PC-9 (cell line): ENCODE measurements at regions of chr14 and their contacts with region 1.

Region 1: GRCh38 chr14:77097700-77098528 is at the start of gene CIPC:
- DNase-seq: peak; percentile 99 to 100
- H3K4me3 ChIP-seq: peak within 1 kb of the TSS; percentile 83
- H3K27ac ChIP-seq: peak within 1 kb of the TSS; percentile 90
- H3K4me1 ChIP-seq: peaks cover 25% of the 10 kb centered on the region
- H3K27me3 ChIP-seq: no peaks in the 10 kb centered on the region
- CTCF ChIP-seq: no peak; the same call in 1 of the 2 replicates
- total RNA-seq, gene CIPC: 54.7 and 66.3 TPM in 2 replicates

Region 2: DNA sequence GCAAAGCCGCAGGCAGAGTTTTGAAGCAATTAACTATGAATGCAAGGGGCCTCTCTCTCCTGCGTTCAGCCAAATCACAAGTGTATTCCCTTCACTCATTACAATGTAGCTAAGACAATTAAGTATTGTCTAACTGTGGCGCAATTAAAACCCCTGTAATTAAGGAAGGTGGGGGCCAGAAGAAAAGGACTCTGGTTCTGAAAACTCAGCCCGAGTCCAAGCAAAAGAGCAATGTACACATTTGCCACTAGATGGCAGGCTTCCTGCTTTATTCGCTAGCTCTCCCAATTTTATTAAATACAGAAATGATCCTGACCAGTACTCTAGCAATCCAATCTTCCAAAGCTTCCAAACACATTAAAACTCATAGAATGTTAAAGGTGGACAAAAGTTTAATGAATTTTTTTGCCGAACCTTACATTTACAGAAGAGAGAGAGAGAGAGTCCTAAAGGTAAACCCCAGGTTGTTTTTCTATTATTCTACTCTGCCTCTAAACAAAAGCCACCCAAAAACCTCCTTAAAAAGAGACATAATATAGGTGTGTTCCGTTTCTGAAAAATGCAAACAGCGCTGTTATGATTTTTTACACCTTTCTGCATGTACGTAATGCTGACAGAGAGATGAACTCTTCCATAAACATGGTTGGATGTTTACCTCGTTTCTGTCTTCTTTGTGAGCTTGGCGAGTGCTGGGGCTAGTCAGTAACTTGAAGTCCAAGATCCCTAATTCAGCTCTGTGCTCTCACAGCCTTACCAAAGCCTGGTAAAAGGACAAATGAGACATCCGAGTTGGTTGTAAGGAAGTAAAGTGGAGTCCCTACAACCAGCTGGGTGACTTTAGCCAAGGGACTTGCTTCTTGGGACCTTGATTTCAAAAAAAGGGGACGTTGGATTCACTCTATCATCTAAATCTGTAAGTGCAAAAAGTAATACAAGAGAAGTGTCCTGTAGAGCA is 387.6 kb before region 1 on chr14:
- CTCF ChIA-PET with region 1: no interaction called
- POLR2A ChIA-PET with region 1: no interaction called
- intact Hi-C with region 1: loop called (anchors 1 kb)
- DNase-seq: peak in 1 of 2 experiments; percentile 35
- H3K4me3 ChIP-seq: no peak overlapping the region
- H3K27ac ChIP-seq: no peak overlapping the region
- H3K4me1 ChIP-seq: no peaks in the 10 kb centered on the region
- H3K27me3 ChIP-seq: peaks cover 93% of the 10 kb centered on the region
- CTCF ChIP-seq: peak; percentile 96

Region 3: GRCh38 chr14:76904740-76905438 is 193.0 kb before region 1 on chr14:
- CTCF ChIA-PET with region 1: interaction called, 3 read pairs
- POLR2A ChIA-PET with region 1: interaction called, 14 read pairs
- intact Hi-C with region 1: loop called (anchors 2 kb)
- DNase-seq: peak; percentile 98 to 100
- H3K4me3 ChIP-seq: peak overlapping the region; percentile 9; the same call in 1 of the 2 replicates
- H3K27ac ChIP-seq: peak overlapping the region; percentile 80
- H3K4me1 ChIP-seq: peaks cover 34% of the 10 kb centered on the region
- H3K27me3 ChIP-seq: no peaks in the 10 kb centered on the region
- CTCF ChIP-seq: no peak

Region 4: DNA sequence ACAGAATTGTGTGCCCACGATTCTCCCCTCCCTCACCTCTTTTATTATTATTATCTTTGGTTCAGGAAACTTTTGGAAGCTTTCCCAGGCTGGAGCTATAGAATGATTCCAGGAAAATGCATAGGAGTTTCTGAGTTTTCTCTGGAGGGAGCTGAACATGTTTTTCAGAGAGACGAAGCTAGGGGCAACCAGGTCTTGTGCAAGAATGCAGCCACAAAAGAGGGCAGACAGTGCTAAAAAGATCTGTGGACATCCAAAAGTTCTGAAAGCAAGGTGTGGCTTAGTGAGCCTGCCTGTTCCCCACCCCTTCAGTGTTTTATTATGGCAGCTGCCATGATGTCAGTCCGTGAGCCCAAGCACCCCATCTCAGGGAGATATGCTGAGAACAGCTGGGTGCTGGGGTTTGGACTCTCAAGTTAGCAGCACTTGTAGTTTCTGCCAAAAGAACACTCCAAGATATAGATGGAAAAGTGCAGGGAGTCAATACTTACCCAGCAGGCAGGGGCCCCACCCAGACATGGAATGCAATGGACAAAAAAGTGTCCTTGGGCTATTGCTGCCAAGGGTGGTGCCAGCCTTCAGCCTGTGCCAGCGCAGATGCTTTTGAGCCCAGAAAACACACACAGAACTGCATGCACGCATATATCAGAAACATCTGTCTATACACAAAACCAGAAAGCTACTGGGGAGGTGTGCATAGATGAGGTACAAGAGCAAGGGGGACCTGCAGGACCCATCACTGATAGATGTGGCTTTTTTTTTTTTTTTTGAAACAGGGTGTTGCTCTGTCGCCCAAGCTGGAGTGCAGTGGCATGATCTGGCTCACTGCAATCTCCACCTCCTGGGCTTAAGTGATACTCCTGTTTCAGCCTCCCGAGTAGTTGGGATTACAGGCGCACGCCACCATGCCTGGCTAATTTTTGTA is 52.4 kb before region 1 on chr14:
- CTCF ChIA-PET with region 1: no interaction called
- POLR2A ChIA-PET with region 1: interaction called, 12 read pairs
- intact Hi-C with region 1: no loop called
- DNase-seq: peak; percentile 91
- H3K4me3 ChIP-seq: peak overlapping the region; percentile 3; the same call in 1 of the 2 replicates
- H3K27ac ChIP-seq: peak overlapping the region; percentile 82
- H3K4me1 ChIP-seq: peaks cover 72% of the 10 kb centered on the region
- H3K27me3 ChIP-seq: no peaks in the 10 kb centered on the region
- CTCF ChIP-seq: no peak

Region 5: DNA sequence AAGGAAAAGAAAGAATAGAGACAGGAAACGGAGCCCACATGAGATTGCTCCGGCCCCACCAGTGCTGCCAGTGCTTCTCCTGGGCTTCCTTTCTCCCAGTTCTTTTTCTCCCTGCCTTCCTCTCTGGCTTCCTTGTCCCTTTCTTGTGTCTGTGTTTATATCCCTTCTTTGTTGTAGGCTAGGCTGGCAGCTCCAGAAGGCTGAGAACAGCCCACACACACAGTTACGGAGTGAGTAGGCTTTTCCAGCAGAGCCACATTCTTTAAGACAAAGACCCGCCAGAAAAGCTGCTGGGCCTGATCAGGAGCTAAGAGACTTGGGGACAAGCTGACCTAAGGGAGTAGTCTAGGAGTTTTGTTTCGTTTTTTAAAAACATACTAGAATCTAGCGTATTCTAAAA is 13.1 kb after region 1 on chr14:
- CTCF ChIA-PET with region 1: interaction called, 6 read pairs
- POLR2A ChIA-PET with region 1: interaction called, 19 read pairs
- intact Hi-C with region 1: loop called (anchors 1 kb)
- DNase-seq: peak; percentile 76 to 93
- H3K4me3 ChIP-seq: no peak overlapping the region
- H3K27ac ChIP-seq: peak overlapping the region; percentile 21; the same call in 1 of the 2 replicates
- H3K4me1 ChIP-seq: peaks cover 5% of the 10 kb centered on the region; the same call in 1 of the 2 replicates
- H3K27me3 ChIP-seq: no peaks in the 10 kb centered on the region
- CTCF ChIP-seq: no peak

Region 6: DNA sequence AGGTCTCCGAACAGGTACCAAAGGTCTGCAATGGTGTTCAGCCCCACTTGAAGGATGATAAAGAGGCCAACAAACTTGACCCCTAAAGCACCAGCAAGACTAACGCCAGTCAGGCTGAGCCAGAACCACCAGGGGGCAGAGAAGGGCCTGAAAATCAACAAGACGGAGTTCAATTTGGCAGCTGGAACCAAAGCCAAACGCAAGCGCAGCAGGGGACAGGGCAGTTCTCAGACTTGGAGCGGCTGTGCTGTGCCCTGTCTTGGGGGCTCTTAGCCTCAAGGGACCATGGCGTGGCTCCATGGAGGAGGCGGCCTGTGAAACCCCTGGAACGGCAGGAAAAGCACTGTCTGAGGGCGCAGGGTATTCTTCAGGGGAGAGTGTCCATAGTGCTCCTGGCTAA is 203.2 kb after region 1 on chr14:
- CTCF ChIA-PET with region 1: no interaction called
- POLR2A ChIA-PET with region 1: no interaction called
- intact Hi-C with region 1: loop called (anchors 5 kb)
- DNase-seq: peak in 1 of 2 experiments; percentile 49
- H3K4me3 ChIP-seq: no peak overlapping the region
- H3K27ac ChIP-seq: no peak overlapping the region
- H3K4me1 ChIP-seq: peaks cover 32% of the 10 kb centered on the region
- H3K27me3 ChIP-seq: no peaks in the 10 kb centered on the region
- CTCF ChIP-seq: peak; percentile 86

Region 7: DNA sequence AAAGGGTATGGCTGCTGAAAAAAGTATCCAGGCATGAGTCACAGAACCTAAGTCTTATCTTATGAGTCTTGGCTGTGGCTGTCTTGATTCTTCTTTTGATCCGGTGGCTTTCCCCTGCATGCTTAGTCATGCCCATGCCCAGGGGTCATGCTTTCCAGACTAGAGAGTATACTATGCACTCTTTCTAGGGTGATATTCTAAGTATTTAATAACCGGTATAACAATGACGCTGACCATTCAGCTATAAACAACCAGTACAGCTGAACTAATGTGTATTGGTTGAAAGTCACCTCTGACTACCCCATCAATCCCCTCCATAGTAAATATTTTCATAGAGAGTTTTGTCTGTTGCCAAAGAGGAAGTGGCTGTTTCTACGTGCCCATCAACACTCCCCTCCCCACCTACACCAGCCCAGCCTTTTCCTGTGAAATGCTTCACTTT is 1037.6 kb after region 1 on chr14:
- CTCF ChIA-PET with region 1: interaction called, 11 read pairs
- POLR2A ChIA-PET with region 1: no interaction called
- intact Hi-C with region 1: no loop called
- DNase-seq: peak in 1 of 2 experiments; percentile 15
- H3K4me3 ChIP-seq: no peak overlapping the region
- H3K27ac ChIP-seq: no peak overlapping the region
- H3K4me1 ChIP-seq: no peaks in the 10 kb centered on the region
- H3K27me3 ChIP-seq: peaks cover 11% of the 10 kb centered on the region; the same call in 1 of the 2 replicates
- CTCF ChIP-seq: no peak